CD8-positive, alpha-beta T cell (primary cell): ENCODE measurements at regions of chr2 and their contacts with region 1.

Region 1: DNA sequence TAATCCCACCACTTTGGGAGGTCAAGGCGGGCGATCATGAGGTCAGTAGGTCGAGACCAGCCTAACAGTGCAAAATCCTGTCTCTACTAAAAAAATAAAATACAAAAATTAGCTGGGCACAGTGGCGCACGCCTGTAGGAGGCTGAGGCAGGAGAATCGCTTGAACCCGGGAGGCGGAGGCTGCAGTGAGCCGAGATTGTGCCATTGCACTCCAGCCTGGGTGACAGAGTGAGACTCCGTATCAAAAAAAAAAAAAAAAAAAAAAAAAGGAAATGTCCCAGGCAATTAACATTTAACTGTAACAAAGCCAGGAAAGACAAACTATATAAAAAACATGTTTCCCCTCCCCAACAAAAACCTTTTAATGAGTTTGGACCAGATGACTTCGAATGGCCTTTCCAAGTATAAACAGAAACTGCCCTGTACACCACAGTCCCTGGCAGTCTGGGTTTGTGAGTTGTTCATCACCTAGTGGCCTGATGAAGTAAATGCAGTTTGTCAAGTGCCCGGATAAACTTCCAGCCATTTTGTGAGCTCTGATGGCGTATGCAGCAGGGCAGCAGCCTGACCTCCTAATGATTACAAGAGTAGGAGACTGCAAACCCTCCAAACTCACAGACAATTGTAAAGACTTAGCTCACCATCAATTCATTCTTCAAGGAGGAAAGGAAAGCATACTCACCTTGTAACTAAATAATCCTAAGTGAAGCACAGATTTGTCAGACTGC is 16.6 kb upstream of the PCBP1 start:
- DNase-seq: peak; percentile 32 to 91 (median 59)
- ATAC-seq: peak; percentile 73
- H3K4me3 ChIP-seq: peak overlapping the region in 1 of 2 experiments; percentile 17
- H3K4me3 Mint-ChIP-seq: peak overlapping the region; percentile 74
- H3K27ac ChIP-seq: peak overlapping the region; percentile 12 to 87
- H3K27ac Mint-ChIP-seq: peak overlapping the region; percentile 97
- H3K4me1 ChIP-seq: peaks cover 42% of the 10 kb centered on the region
- H3K4me1 Mint-ChIP-seq: peaks cover 49% of the 10 kb centered on the region
- H3K27me3 ChIP-seq: no peaks in the 10 kb centered on the region
- H3K27me3 Mint-ChIP-seq: no peaks in the 10 kb centered on the region
- CTCF ChIP-seq: peak; percentile 87

Region 2: DNA sequence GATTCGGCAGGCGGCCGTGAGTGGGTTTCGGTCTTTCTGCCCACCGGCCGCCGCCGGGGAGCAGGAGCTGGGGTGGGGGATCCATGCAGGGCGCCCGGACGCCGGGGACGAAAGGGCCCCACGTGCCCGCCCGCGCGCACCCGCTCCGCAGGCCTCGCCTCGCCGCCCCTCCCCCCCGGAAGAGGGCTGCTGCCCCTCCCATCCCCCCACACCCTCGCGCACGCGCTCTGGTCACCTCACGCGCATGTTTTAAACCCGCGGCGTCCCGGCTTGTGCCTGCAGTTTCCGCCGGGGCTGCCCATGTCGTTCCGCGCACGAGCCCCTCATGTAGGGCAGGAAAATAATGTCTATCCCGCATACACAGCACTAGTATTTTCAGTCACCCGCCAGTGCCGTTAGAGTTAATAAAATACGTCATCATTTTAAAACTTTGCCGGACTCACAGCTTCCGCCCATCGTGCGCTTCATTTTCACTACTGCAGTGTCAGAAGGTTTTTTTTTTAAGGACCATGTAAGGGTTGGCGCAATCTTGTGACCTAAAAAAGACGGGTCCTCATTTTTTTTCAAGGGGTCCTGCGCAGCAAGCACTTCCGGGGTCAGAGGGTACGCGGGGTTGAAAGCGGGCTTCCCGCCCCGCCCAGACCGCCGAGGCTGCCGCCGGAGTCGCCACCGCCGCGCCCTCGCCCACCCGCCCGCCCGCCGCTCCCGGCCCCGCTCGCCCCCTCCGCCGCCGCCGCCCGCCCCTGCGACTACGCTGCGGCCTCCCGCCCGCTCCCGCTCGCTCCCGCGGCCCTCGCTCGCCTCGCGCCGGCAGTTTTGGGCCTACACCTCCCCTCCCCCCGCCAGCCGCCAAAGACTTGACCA is 16.4 kb after region 1 on chr2 and contains the start of gene PCBP1:
- CTCF ChIA-PET with region 1: interaction called, 45 read pairs
- POLR2A ChIA-PET with region 1: interaction called, 43 read pairs
- intact Hi-C with region 1: loop called (anchors 1 kb)
- DNase-seq: peak; percentile 95 to 100 (median 98)
- ATAC-seq: peak; percentile 60
- H3K4me3 ChIP-seq: peak within 1 kb of the TSS; percentile 95 to 98
- H3K4me3 Mint-ChIP-seq: peak within 1 kb of the TSS; percentile 98
- H3K27ac ChIP-seq: peak within 1 kb of the TSS; percentile 99
- H3K27ac Mint-ChIP-seq: peak within 1 kb of the TSS; percentile 100
- H3K4me1 ChIP-seq: peaks cover 62% of the 10 kb centered on the region
- H3K4me1 Mint-ChIP-seq: peaks cover 69% of the 10 kb centered on the region
- H3K27me3 ChIP-seq: no peaks in the 10 kb centered on the region
- H3K27me3 Mint-ChIP-seq: no peaks in the 10 kb centered on the region
- CTCF ChIP-seq: no peak
- total RNA-seq, gene PCBP1: 239 to 255 TPM

Region 3: DNA sequence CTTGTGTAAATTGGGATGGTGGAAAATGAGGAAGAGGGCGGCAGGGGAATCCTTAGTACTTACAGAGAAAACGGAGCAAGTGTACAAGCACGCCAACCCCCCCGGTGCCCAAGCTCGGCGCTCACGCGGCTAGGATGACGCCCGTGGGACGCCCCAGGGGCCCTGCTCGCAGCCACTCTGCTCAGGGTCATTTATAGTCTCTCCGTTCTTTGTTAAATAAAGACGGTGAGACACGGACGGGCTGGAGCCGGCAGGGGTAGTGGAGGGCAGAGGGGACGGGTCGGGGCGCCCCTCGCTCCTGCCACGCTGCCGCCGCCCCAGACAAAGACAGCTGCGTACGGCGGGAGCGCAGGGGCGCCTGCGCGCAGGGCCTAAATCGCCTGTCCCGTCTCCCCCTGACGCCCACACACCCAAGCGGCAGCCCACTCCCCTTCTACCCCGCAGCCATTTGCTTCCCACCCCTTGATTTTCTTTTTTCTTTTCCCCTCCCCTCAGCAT is 54.3 kb after region 1 on chr2:
- CTCF ChIA-PET with region 1: interaction called, 3 read pairs
- POLR2A ChIA-PET with region 1: interaction called, 13 read pairs
- intact Hi-C with region 1: no loop called
- DNase-seq: peak; percentile 52 to 85 (median 70)
- ATAC-seq: peak; percentile 64
- H3K4me3 ChIP-seq: peak overlapping the region; percentile 47 to 61
- H3K4me3 Mint-ChIP-seq: peak overlapping the region; percentile 95
- H3K27ac ChIP-seq: peak overlapping the region; percentile 97
- H3K27ac Mint-ChIP-seq: peak overlapping the region; percentile 100
- H3K4me1 ChIP-seq: peaks cover 62% of the 10 kb centered on the region
- H3K4me1 Mint-ChIP-seq: peaks cover 70% of the 10 kb centered on the region
- H3K27me3 ChIP-seq: no peaks in the 10 kb centered on the region
- H3K27me3 Mint-ChIP-seq: no peaks in the 10 kb centered on the region
- CTCF ChIP-seq: no peak

Region 4: DNA sequence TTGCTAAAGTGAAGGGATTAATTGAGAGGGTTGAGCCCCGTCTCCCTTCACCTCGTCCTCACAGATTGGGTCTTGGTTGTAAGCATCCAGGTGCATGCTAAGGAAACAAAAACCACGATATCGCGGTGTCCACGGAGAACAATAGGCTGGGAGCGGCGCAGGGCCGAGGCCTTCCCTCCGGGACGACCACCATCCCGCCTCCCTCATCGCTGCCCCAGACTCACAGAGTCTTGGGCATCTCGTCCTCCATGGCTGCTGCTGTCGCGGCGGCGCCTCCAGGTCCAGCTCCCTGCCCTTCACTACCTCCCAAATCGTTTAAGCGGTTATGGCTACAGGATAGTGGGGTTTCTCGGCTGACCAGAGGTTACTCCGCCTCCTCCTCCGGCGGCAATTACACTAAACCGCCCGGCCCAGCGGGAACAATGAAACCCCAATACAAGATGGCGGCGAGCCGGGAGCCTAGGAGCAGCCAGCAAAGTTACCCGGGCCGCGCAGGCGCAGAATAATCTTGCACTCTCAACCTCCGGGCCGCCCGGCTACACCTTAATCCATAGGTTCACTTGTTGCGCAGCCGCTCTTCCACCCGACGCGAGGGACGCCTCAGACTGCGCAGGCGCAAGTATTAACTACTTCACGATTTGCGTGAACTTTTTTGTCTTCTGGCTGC is 177.6 kb after region 1 on chr2 and contains the start of gene TIA1:
- CTCF ChIA-PET with region 1: interaction called, 3 read pairs
- POLR2A ChIA-PET with region 1: no interaction called
- intact Hi-C with region 1: loop called in 1 of 2 experiments (anchors 1 kb)
- DNase-seq: peak; percentile 96 to 100 (median 98)
- ATAC-seq: peak; percentile 98
- H3K4me3 ChIP-seq: peak within 1 kb of the TSS; percentile 86 to 90
- H3K4me3 Mint-ChIP-seq: peak within 1 kb of the TSS; percentile 97
- H3K27ac ChIP-seq: peak within 1 kb of the TSS; percentile 86 to 92
- H3K27ac Mint-ChIP-seq: peak within 1 kb of the TSS; percentile 98
- H3K4me1 ChIP-seq: peaks cover 30% of the 10 kb centered on the region
- H3K4me1 Mint-ChIP-seq: peaks cover 37% of the 10 kb centered on the region
- H3K27me3 ChIP-seq: no peaks in the 10 kb centered on the region
- H3K27me3 Mint-ChIP-seq: no peaks in the 10 kb centered on the region
- CTCF ChIP-seq: no peak
- total RNA-seq, gene TIA1: 55.9 to 62.6 TPM